Heart right ventricle (tissue), 16 donors: ENCODE measurements at regions of chr17 and their contacts with region 1.

Region 1: DNA sequence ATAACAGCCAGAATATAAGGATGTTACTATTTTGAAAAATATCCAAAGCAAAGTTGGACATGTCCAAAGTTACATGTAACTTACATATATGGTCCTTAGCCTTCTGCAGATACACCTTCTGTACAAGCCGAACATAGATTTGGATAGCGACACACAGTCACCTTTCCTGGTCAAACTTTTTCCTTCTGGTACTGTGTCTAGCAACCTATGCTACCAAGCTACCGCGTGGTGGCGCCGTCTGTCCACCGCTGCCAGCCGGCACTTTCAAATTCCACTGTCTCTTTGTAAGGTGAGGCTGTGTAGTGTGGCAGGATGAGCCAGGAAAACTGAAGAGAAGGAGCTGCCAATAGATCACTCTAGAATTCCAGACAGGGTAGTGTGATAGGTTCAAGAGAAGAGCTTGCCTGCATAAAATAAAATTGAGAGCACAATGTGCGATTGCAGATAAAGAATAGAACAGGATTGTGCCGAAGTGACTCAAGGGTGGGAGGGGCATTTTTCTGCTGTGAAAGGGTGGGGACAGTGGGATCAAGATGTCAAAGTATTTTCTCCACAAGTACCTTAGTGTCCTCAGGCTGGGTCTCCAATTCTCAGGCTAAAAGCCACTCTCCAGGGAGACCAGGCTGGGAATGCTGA is 366.9 kb downstream of the SLC39A11 start:
- DNase-seq: peak; percentile 23 to 41
- ATAC-seq: peak in 7 of 8 donors; percentile 56 to 89 (median 73)
- H3K4me3 ChIP-seq: no peak overlapping the region
- H3K27ac ChIP-seq: no peak overlapping the region
- H3K4me1 ChIP-seq: peaks cover 0 to 8% (median 0%) of the 10 kb centered on the region in 9 donors
- H3K27me3 ChIP-seq: no peaks in the 10 kb centered on the region
- CTCF ChIP-seq: peak; percentile 47 to 91 (median 85)

Region 2: DNA sequence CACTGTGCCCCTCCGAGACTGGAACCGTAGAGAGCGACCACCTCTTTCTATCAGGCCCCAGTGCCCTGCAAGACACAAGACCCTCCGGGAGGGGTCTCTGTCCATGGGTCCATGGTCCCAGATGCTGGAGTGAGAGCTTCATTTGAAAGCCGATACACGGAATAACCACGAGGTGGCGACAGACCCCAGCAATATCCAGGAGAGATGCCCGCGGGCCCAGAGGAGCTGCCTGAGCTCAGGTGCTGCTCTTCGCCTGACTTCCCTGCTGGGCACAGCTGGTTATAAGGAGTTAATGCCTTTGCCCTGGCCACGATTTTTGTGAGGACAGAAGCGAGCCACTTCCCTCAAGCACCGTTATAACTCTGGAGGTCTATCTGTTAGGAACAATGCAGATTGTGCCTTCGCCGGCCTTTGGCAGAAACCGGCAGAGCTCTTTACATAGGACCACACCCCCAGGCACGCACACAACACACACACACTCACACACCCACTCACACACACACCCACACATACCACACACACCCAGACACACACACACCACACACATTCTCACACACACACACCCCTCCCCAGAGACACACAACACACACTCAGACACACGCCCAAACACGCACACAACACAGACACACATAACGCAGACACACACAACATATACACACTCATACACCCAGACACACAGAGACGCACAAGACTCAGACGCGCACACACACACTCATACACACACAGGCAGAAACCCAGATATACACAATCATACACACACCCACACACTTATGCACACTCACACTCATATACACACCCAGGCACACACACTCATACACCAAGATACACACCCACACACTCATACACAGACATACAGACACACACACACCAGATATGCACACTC is 168.4 kb before region 1 on chr17:
- intact Hi-C with region 1: loop called in 8 of 10 experiments (anchors 5 to 10 kb)
- DNase-seq: peak; percentile 36 to 41
- ATAC-seq: peak; percentile 24 to 71 (median 53)
- H3K4me3 ChIP-seq: no peak overlapping the region
- H3K27ac ChIP-seq: no peak overlapping the region
- H3K4me1 ChIP-seq: no peaks in the 10 kb centered on the region
- H3K27me3 ChIP-seq: peaks cover 0 to 29% (median 10%) of the 10 kb centered on the region in 7 donors
- CTCF ChIP-seq: peak; percentile 65 to 86 (median 81)

Region 3: GRCh38 chr17:72775919-72776318 is 50.4 kb after region 1 on chr17:
- intact Hi-C with region 1: no loop called
- DNase-seq: no peak
- ATAC-seq: no peak
- H3K4me3 ChIP-seq: no peak overlapping the region
- H3K27ac ChIP-seq: no peak overlapping the region
- H3K4me1 ChIP-seq: no peaks in the 10 kb centered on the region
- H3K27me3 ChIP-seq: no peaks in the 10 kb centered on the region
- CTCF ChIP-seq: no peak

Region 4: DNA sequence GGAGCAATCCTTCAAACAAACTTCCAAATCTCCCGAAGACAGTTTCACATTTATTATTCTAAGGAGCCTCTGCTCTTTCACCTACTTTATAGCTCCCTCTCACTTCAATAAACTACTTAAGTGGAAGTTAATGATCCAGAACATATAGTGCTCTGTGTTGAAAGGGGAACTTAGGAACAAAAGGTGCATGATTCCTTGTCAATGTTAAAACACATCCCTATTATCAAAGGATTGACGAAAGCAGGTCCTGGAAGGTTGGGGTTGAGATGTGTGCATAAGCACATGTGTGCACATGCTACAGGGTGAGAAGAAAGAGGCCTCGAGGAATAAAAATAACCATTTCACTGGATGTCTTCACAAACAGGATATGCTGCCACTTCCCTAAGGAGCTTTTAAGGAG is 196.7 kb after region 1 on chr17:
- intact Hi-C with region 1: loop called in 1 of 10 experiments (anchors 10 kb)
- DNase-seq: no peak
- ATAC-seq: no peak
- H3K4me3 ChIP-seq: no peak overlapping the region
- H3K27ac ChIP-seq: no peak overlapping the region
- H3K4me1 ChIP-seq: no peaks in the 10 kb centered on the region
- H3K27me3 ChIP-seq: no peaks in the 10 kb centered on the region
- CTCF ChIP-seq: no peak

Region 5: DNA sequence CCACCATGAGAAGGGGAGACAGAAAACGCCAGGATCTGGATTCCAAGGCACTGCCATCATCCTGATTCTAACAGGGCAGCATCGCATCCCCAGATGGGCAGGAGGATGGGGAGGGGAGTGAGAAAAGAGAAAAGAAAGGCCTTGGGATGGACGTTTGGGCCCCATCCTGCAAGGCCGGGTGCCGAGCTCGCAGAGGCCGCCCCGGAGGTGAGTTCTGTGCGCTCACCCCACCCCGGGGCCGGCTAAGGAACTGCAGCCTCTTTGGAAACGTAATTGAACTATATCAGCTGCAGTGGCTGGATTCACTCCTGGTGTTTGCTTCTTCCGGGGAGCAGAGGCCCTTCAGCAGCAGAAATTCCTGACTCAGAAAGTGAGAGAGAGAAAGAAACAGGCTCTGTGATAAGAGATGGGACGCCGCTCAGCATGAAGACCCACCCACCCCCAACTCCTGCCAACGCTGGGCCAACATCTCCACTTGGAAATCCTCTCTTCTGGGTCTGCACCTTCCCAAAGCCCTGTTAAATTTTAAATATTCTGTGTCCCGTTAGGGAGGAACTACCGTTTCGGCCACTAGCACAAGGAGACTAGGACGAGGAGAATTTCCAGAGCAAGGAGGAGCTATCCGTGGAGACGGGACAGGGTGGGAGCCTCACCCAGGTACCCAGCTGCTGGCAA is 430.8 kb after region 1 on chr17:
- intact Hi-C with region 1: loop called in 8 of 10 experiments (anchors 5 to 10 kb)
- DNase-seq: peak; percentile 62 to 73
- ATAC-seq: peak; percentile 81 to 95 (median 92)
- H3K4me3 ChIP-seq: no peak overlapping the region
- H3K27ac ChIP-seq: peak overlapping the region in 1 of 10 donors; percentile 10
- H3K4me1 ChIP-seq: peaks cover 0 to 20% (median 8%) of the 10 kb centered on the region in 9 donors
- H3K27me3 ChIP-seq: peaks cover 0 to 40% (median 24%) of the 10 kb centered on the region in 7 donors
- CTCF ChIP-seq: peak; percentile 50 to 89 (median 80)

Region 6: GRCh38 chr17:73192894-73193701 is 467.5 kb after region 1 on chr17 and contains the start of gene COG1:
- intact Hi-C with region 1: loop called in 7 of 10 experiments (anchors 2 to 10 kb)
- DNase-seq: peak; percentile 91 to 92
- ATAC-seq: peak; percentile 88 to 93 (median 90)
- H3K4me3 ChIP-seq: peak within 1 kb of the TSS; percentile 67 to 98 (median 92)
- H3K27ac ChIP-seq: peak within 1 kb of the TSS; percentile 58 to 96 (median 90)
- H3K4me1 ChIP-seq: peaks cover 3 to 25% (median 15%) of the 10 kb centered on the region in 9 donors
- H3K27me3 ChIP-seq: no peaks in the 10 kb centered on the region
- CTCF ChIP-seq: no peak
- total RNA-seq, gene COG1: 44.4 to 70.6 (median 58.0) TPM

Region 7: GRCh38 chr17:73255671-73256181 is 530.2 kb after region 1 on chr17:
- intact Hi-C with region 1: loop called in 3 of 10 experiments (anchors 10 kb)
- DNase-seq: peak; percentile 55 to 64
- ATAC-seq: peak; percentile 63 to 87 (median 72)
- H3K4me3 ChIP-seq: no peak overlapping the region
- H3K27ac ChIP-seq: no peak overlapping the region
- H3K4me1 ChIP-seq: peaks cover 0 to 8% (median 0%) of the 10 kb centered on the region in 9 donors
- H3K27me3 ChIP-seq: no peaks in the 10 kb centered on the region
- CTCF ChIP-seq: peak in 8 of 9 donors; percentile 94 to 99 (median 98)

Region 8: GRCh38 chr17:73365906-73366623 is 640.5 kb after region 1 on chr17:
- intact Hi-C with region 1: loop called in 7 of 10 experiments (anchors 5 to 10 kb)
- DNase-seq: peak; percentile 65 to 66
- ATAC-seq: peak; percentile 40 to 88 (median 70)
- H3K4me3 ChIP-seq: peak overlapping the region in 6 of 10 donors; percentile 4 to 24 (median 9)
- H3K27ac ChIP-seq: peak overlapping the region; percentile 65 to 82 (median 74)
- H3K4me1 ChIP-seq: peaks cover 10 to 32% (median 27%) of the 10 kb centered on the region in 9 donors
- H3K27me3 ChIP-seq: no peaks in the 10 kb centered on the region
- CTCF ChIP-seq: no peak